MCF 10A (cell line): ENCODE measurements at regions of chr7 and their contacts with region 1.

Region 1: DNA sequence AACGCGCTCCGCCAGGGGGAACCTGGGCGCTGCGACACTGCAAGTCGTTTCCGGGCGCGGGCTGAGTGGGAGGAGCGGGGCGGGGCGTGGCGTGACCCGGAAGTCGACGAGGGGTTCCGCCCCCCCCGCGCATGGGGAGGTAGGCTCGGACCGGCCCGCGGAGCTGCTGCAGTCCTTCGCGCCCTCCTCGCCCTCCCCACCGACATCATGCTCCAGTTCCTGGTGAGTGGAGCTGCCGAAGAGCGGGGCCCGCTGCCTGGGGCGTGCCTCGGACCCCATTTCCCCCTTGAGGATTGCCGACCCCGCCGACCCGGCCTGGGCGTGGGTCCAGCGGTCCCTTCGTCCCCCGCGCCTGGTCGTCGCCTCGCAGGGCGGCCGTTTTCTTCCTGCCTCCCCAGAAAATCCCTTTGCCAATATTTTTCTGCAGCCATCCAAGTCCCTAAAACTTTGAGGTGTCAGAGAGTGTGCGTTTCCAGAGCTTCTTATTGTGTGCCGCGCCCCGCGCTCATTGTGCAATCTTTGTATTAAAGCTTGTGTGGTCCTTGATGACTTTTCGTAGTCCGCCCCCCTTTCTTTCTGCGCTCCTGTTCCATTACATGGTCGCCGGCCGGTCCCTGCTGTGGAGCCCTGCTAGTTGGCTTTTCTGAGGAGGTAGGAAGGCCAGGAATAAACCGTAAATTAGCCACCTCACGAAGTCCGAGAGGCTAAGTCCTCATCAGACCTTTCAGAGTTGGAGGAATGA is at the start of gene STMP1:
- DNase-seq: peak; percentile 92
- H3K4me3 Mint-ChIP-seq: peak within 1 kb of the TSS; percentile 97
- H3K27ac Mint-ChIP-seq: peak within 1 kb of the TSS; percentile 98
- H3K4me1 Mint-ChIP-seq: peaks cover 26% of the 10 kb centered on the region
- H3K27me3 Mint-ChIP-seq: no peaks in the 10 kb centered on the region
- CTCF ChIP-seq: no peak
- total RNA-seq, gene STMP1: 33.6 and 37.0 TPM in 2 replicates

Region 2: DNA sequence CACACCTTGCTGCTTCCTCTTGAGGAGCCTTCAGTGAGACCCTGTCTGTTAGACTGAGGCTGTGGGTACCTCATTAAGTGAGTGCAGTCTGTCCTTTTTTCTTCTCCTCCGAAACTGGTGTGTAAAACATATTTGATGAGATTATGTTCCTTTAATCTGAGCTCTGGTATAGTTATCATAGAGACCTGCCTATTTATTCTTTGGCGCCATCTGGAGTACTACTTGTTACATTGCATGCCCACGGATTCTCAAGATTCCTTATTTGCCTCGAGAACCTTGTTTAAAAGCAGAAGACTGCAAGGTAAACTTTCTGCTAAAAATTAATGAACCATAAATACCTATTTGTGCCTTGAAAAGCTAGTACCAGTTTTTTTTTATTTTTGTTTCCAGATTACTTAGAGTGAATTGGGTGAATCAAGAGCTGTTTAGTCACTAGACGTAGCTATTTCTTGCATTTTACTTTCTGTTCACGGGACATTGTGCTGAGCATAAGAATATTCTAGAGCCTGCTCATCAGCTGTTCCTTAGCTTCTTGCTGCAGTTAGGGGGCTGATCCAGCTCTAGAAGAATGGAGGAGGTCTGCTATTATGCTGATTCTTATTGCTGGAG is 17.1 kb before region 1 on chr7:
- CTCF ChIA-PET with region 1: interaction called, 80 read pairs
- POLR2A ChIA-PET with region 1: interaction called, 7 read pairs
- intact Hi-C with region 1: no loop called
- DNase-seq: peak; percentile 57
- H3K4me3 Mint-ChIP-seq: no peak overlapping the region
- H3K27ac Mint-ChIP-seq: no peak overlapping the region
- H3K4me1 Mint-ChIP-seq: no peaks in the 10 kb centered on the region
- H3K27me3 Mint-ChIP-seq: no peaks in the 10 kb centered on the region
- CTCF ChIP-seq: peak; percentile 46

Region 3: DNA sequence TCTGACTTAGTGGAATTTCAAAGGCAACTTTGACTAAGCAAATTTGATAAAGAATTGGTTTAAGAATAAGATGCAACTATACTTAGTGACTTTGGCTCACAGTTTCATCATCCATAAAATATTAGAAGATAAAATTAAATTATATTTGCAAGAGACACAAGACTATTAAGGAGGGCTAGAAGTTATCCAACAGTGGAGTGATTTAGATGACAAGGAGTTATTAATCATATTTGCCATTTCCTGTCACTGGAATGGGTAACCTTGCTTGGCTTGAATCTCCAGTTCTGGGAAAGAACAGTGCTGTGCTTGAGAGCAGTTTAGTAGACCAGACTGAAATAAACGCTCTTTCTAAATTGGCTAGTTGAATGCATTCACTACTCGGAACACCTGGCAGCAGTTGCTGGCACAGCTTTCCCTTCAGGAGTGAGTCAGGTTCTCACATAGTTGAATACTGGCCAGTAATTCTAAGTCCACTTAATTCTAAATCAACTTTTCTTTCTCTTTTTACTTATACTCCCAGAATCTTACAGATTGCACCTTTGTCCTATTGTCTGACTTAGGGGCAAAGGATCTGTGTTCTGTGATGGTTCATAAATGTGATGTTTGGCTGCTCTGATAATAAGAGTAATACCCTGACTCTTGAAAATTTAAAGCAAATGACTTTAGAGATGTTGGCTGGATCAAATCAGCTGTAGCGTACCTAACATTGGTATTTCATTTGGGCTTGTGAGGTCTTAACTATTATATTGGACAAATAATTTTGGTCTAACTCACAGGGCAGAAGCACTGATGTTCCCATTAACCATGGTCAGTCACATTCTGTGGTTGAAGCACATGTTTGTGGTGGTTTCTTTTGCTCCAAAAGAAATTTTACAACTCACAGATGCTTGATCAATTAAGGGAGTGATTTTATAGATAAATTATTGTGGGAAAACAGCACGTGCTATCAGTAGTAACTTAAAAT is 16.4 kb after region 1 on chr7:
- CTCF ChIA-PET with region 1: interaction called, 68 read pairs
- POLR2A ChIA-PET with region 1: interaction called, 17 read pairs
- intact Hi-C with region 1: no loop called
- DNase-seq: peak; percentile 85
- H3K4me3 Mint-ChIP-seq: peak overlapping the region; percentile 44
- H3K27ac Mint-ChIP-seq: peak overlapping the region; percentile 73
- H3K4me1 Mint-ChIP-seq: peaks cover 35% of the 10 kb centered on the region
- H3K27me3 Mint-ChIP-seq: no peaks in the 10 kb centered on the region
- CTCF ChIP-seq: no peak

Region 4: DNA sequence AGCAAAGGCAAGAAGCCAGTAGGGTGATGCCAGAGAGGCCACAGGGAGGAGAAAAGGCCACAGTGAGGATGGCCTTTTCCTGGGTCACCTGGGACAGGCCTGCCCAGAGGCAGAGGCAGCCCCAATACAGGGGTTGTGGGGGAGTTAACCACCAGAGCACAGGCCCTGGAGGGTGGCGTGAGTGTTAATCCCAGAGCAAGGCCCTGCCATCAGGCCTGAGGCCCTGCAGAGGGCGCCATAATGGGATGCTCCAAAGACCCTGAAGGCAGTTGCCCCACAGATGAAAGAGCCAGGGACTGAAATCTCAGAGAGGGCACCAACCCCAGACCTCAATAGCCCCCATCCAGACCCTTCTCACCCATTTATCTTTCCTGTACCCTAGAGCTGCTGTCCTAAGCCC is 41.5 kb after region 1 on chr7:
- CTCF ChIA-PET with region 1: interaction called, 12 read pairs
- POLR2A ChIA-PET with region 1: interaction called, 11 read pairs
- intact Hi-C with region 1: no loop called
- DNase-seq: no peak
- H3K4me3 Mint-ChIP-seq: no peak overlapping the region
- H3K27ac Mint-ChIP-seq: no peak overlapping the region
- H3K4me1 Mint-ChIP-seq: peaks cover 18% of the 10 kb centered on the region
- H3K27me3 Mint-ChIP-seq: no peaks in the 10 kb centered on the region
- CTCF ChIP-seq: peak; percentile 12

Region 5: DNA sequence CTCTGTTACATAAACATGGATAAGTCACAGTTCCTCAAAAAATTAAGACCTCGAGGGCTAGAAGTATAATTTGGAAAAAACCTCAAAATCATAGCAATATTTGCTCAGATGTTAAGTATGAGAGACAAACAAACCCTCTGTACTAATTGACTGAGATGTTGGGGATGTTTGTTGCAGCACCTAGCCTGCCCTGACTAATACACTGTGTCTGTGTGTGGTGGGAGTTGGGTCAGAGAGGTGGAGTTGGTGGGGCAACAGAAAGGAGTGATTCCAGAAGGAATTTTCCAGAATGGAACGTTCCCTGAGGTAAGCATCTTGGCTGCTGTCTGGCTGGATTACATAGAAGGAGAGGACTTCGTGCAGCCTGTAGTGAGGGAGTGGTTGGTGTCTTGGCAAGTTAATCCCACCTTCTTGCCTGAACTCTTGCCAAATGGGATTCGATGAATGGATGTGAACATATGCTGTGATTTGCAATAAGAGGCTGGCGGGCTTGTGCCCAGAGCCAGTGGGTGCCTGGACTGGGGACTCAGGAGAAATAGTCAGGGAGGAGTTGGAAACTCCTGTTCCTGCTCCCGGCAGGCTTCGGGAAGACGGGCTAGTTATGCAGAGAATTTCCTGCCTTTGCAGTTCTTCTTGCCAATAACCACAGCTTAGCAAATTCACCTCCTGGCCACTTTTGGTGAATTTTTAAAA is 95.3 kb after region 1 on chr7:
- CTCF ChIA-PET with region 1: no interaction called
- POLR2A ChIA-PET with region 1: interaction called, 13 read pairs
- intact Hi-C with region 1: no loop called
- DNase-seq: peak; percentile 58
- H3K4me3 Mint-ChIP-seq: peak overlapping the region; percentile 68
- H3K27ac Mint-ChIP-seq: peak overlapping the region; percentile 73
- H3K4me1 Mint-ChIP-seq: peaks cover 24% of the 10 kb centered on the region
- H3K27me3 Mint-ChIP-seq: no peaks in the 10 kb centered on the region
- CTCF ChIP-seq: no peak